ENCODE measurements at regions of chr2 and their contacts with region 1.

Region 1: GRCh38 chr2:65227425-65228262 is at the start of gene ACTR2:
- DNase-seq: peak; percentile 97 to 98 (median 98)
- H3K4me3 ChIP-seq: peak within 1 kb of the TSS; percentile 79 to 92 (median 89)
- H3K4me3 Mint-ChIP-seq: peak within 1 kb of the TSS; percentile 93 to 98
- H3K27ac ChIP-seq: peak within 1 kb of the TSS; percentile 96 to 99
- H3K27ac Mint-ChIP-seq: peak within 1 kb of the TSS; percentile 97 to 100 (median 99)
- H3K4me1 ChIP-seq: peaks cover 38 to 52% of the 10 kb centered on the region in 2 donors
- H3K4me1 Mint-ChIP-seq: peaks cover 35% of the 10 kb centered on the region
- H3K27me3 ChIP-seq: no peaks in the 10 kb centered on the region
- H3K27me3 Mint-ChIP-seq: peaks cover 0 to 6% (median 2%) of the 10 kb centered on the region in 3 donors
- CTCF ChIP-seq: no peak
- polyA plus RNA-seq, gene ACTR2: 88.7 to 560 (median 342) TPM

Region 2: DNA sequence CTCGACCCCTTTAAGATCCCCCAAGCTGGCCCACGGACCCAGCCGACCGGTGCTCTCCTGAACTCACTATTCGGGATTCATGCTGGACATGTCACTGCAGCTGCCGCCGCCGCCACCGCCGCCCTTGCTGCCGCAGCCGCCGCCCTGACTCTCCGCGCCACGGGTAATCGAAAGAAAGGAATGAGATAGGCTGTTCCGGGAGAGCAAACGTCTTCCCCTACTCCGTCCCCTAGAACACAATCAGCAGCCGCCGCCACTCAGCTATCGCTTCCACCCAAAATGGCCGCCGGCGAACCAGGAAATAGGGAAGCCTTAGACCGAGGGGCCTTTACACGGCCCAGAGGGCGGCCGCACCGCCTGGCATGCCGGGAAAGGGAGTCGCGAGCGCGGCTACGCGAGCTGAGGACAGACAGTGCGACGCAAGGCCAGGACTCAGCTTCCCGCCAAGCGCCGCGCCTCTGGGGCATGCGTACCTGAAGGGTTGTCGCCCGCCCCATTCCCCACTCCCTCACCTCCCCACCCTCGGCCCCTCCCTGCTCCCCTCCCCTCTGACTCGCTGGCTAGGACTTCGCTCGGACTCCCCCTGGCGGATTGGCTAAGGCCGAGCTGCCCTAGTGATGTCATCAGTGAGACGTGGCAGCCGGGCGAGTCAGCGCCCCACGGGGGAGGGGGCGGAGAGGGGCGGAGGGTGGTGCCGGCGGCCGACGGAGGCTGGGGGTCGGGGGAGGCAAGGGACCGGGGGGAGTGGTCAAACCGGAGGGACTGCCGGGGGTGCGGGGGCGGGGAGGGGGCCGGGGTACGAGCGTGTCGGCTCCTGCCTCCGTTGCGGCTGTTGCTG is 97.6 kb before region 1 on chr2 and contains the start of gene RAB1A:
- intact Hi-C with region 1: loop called in 1 of 2 experiments (anchors 5 kb)
- DNase-seq: peak; percentile 99 to 100 (median 100)
- H3K4me3 ChIP-seq: peak within 1 kb of the TSS; percentile 96 to 99 (median 98)
- H3K4me3 Mint-ChIP-seq: peak within 1 kb of the TSS; percentile 96 to 99
- H3K27ac ChIP-seq: peak within 1 kb of the TSS; percentile 96 to 97
- H3K27ac Mint-ChIP-seq: peak within 1 kb of the TSS; percentile 97 to 100 (median 100)
- H3K4me1 ChIP-seq: peaks cover 29 to 38% of the 10 kb centered on the region in 2 donors
- H3K4me1 Mint-ChIP-seq: peaks cover 36% of the 10 kb centered on the region
- H3K27me3 ChIP-seq: no peaks in the 10 kb centered on the region
- H3K27me3 Mint-ChIP-seq: peaks cover 0 to 7% (median 0%) of the 10 kb centered on the region in 3 donors
- CTCF ChIP-seq: no peak
- polyA plus RNA-seq, gene RAB1A: 106 to 124 (median 110) TPM

Region 3: DNA sequence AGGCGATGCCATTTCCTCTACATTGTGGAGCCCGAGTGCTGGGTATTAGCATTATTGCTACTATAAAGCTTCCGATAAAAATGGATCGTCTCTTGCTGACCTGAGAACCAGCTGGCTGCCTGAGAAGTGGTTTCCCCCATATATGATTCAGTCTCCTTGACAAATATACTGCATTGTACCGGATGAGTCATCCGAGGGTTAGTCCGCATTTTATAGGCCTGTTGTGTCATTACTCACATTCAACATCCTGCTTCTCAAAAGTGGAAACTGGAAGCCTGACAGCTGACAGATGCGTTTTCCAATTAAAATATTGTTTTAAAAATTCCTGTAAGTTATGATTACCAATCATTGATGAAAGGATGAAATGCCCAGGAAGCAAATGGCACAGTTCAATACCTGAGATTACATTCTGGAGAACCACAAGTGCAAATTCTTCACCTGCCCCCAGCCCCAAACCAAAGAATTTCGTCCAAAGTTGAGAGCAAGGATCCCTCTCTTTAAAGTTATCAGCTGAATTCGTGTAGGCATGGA is 139.0 kb after region 1 on chr2:
- intact Hi-C with region 1: loop called in 1 of 2 experiments (anchors 5 kb)
- DNase-seq: peak; percentile 85 to 97 (median 94)
- H3K4me3 ChIP-seq: peak overlapping the region in 1 of 3 experiments; percentile 55
- H3K4me3 Mint-ChIP-seq: peak overlapping the region in 1 of 2 donors; percentile 28
- H3K27ac ChIP-seq: peak overlapping the region in 1 of 2 donors; percentile 77
- H3K27ac Mint-ChIP-seq: peak overlapping the region; percentile 71 to 88 (median 80)
- H3K4me1 ChIP-seq: peaks cover 39 to 51% of the 10 kb centered on the region in 2 donors
- H3K4me1 Mint-ChIP-seq: peaks cover 48% of the 10 kb centered on the region
- H3K27me3 ChIP-seq: no peaks in the 10 kb centered on the region
- H3K27me3 Mint-ChIP-seq: peaks cover 0 to 4% (median 0%) of the 10 kb centered on the region in 3 donors
- CTCF ChIP-seq: no peak

Measured in CD14-positive monocyte (primary cell).